Breast epithelium (tissue), 4 donors: ENCODE measurements at regions of chr4 and their contacts with region 1.

Region 1: GRCh38 chr4:42417550-42417949 is 20.3 kb downstream of the SHISA3 start:
- DNase-seq: no peak
- H3K4me3 ChIP-seq: no peak overlapping the region
- H3K27ac ChIP-seq: no peak overlapping the region
- H3K4me1 ChIP-seq: no peaks in the 10 kb centered on the region
- H3K27me3 ChIP-seq: no peaks in the 10 kb centered on the region
- CTCF ChIP-seq: no peak
- POLR2A ChIP-seq: no peak

Region 2: GRCh38 chr4:42428036-42428435 is 10.5 kb after region 1 on chr4:
- intact Hi-C with region 1: no loop called
- DNase-seq: no peak
- H3K4me3 ChIP-seq: no peak overlapping the region
- H3K27ac ChIP-seq: no peak overlapping the region
- H3K4me1 ChIP-seq: no peaks in the 10 kb centered on the region
- H3K27me3 ChIP-seq: no peaks in the 10 kb centered on the region
- CTCF ChIP-seq: no peak
- POLR2A ChIP-seq: no peak

Region 3: GRCh38 chr4:42490015-42490414 is 72.5 kb after region 1 on chr4:
- intact Hi-C with region 1: loop called (anchors 2 kb)
- DNase-seq: no peak
- H3K4me3 ChIP-seq: no peak overlapping the region
- H3K27ac ChIP-seq: no peak overlapping the region
- H3K4me1 ChIP-seq: no peaks in the 10 kb centered on the region
- H3K27me3 ChIP-seq: no peaks in the 10 kb centered on the region
- CTCF ChIP-seq: no peak
- POLR2A ChIP-seq: no peak